ENCODE measurements at regions of chr7 and their contacts with region 1.

Region 1: GRCh38 chr7:101287032-101287431 is 34.6 kb downstream of the IFT22 start:
- DNase-seq: no peak
- H3K4me3 ChIP-seq: no peak overlapping the region
- H3K27ac ChIP-seq: no peak overlapping the region
- H3K4me1 ChIP-seq: peaks cover 0 to 4% of the 10 kb centered on the region in 2 donors
- H3K27me3 ChIP-seq: no peaks in the 10 kb centered on the region
- CTCF ChIP-seq: no peak
- POLR2A ChIP-seq: no peak

Region 2: GRCh38 chr7:101185258-101185839 is 101.7 kb before region 1 on chr7:
- intact Hi-C with region 1: loop called (anchors 5 kb)
- DNase-seq: no peak
- H3K4me3 ChIP-seq: no peak overlapping the region
- H3K27ac ChIP-seq: no peak overlapping the region
- H3K4me1 ChIP-seq: no peaks in the 10 kb centered on the region
- H3K27me3 ChIP-seq: peaks cover 8% of the 10 kb centered on the region
- CTCF ChIP-seq: no peak
- POLR2A ChIP-seq: no peak

Measured in thyroid gland (tissue), 4 donors.